Panc1 (cell line): ENCODE measurements at regions of chr16 and their contacts with region 1.

Region 1: GRCh38 chr16:29926005-29926710 is at the start of gene KCTD13:
- DNase-seq: no peak
- ATAC-seq: peak; percentile 97
- H3K4me3 ChIP-seq: peak within 1 kb of the TSS; percentile 59 to 88
- H3K27ac ChIP-seq: peak within 1 kb of the TSS; percentile 97
- H3K4me1 ChIP-seq: peaks cover 14% of the 10 kb centered on the region
- H3K27me3 ChIP-seq: no peaks in the 10 kb centered on the region
- CTCF ChIP-seq: no peak
- total RNA-seq, gene KCTD13: 45.7 TPM

Region 2: GRCh38 chr16:29943846-29944669 is 17.9 kb after region 1 on chr16:
- CTCF ChIA-PET with region 1: no interaction called
- POLR2A ChIA-PET with region 1: interaction called, 10 read pairs
- in situ Hi-C with region 1: no loop called
- intact Hi-C with region 1: no loop called
- DNase-seq: peak; percentile 98
- ATAC-seq: peak; percentile 99
- H3K4me3 ChIP-seq: peak overlapping the region; percentile 23 to 53
- H3K27ac ChIP-seq: peak overlapping the region; percentile 99
- H3K4me1 ChIP-seq: peaks cover 17% of the 10 kb centered on the region
- H3K27me3 ChIP-seq: no peaks in the 10 kb centered on the region
- CTCF ChIP-seq: no peak